Sigmoid colon (tissue), 7 donors: ENCODE measurements at regions of chr2 and their contacts with region 1.

Region 1: DNA sequence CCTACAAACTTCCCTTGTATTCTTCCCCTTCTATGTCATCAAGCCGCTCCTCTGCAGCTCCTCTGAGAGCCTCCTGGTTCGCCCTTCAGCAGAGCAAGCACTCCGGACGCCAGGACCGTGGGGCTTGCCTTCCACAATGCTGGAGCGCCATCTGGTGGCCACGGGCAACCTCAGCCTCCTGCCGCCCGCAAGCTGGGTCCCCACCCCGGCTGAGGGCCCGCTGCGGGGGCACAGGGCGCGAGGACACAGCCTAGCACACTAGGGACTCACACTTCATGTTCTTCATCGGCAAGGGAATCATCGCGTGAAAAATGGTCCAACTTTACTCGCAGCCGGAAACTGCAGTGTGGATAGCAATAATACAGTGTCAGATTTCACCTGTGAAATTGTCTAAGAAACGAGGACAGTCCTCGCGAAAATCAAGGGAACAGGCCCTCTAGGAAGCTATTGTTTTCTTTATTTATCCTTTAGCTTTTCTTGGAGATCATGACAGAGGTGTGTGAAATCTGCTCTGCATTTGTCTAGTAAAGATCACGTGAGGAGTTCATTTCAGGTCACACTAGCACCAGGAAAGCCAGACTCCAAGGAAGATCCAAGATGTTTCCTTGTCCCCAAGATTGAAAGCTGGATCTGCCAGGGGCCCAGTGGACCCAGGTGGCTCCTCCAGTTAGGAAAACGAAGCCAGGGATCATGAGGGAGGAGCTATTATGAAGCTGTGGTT is 5.8 kb downstream of the PRLH start:
- DNase-seq: peak; percentile 96
- H3K4me3 ChIP-seq: peak overlapping the region in 1 of 4 donors; percentile 29
- H3K27ac ChIP-seq: peak overlapping the region in 3 of 4 donors; percentile 16 to 40 (median 19)
- H3K4me1 ChIP-seq: peaks cover 0 to 15% (median 11%) of the 10 kb centered on the region in 4 donors
- H3K27me3 ChIP-seq: no peaks in the 10 kb centered on the region
- CTCF ChIP-seq: peak; percentile 98 to 100 (median 99)
- EP300 ChIP-seq: no peak
- POLR2A ChIP-seq: no peak

Region 2: GRCh38 chr2:237092920-237093781 is 479.0 kb before region 1 on chr2:
- intact Hi-C with region 1: loop called (anchors 5 kb)
- DNase-seq: peak; percentile 88
- H3K4me3 ChIP-seq: no peak overlapping the region
- H3K27ac ChIP-seq: peak overlapping the region; percentile 68 to 82 (median 80)
- H3K4me1 ChIP-seq: peaks cover 0 to 57% (median 29%) of the 10 kb centered on the region in 4 donors
- H3K27me3 ChIP-seq: no peaks in the 10 kb centered on the region
- CTCF ChIP-seq: peak; percentile 55 to 81 (median 68)
- EP300 ChIP-seq: peak in 2 of 4 donors; percentile 37 to 51
- POLR2A ChIP-seq: no peak

Region 3: GRCh38 chr2:237122214-237122666 is 449.9 kb before region 1 on chr2:
- intact Hi-C with region 1: loop called (anchors 10 kb)
- DNase-seq: peak; percentile 87
- H3K4me3 ChIP-seq: no peak overlapping the region
- H3K27ac ChIP-seq: peak overlapping the region in 2 of 4 donors; percentile 84 to 93
- H3K4me1 ChIP-seq: peaks cover 0 to 49% (median 35%) of the 10 kb centered on the region in 4 donors
- H3K27me3 ChIP-seq: no peaks in the 10 kb centered on the region
- CTCF ChIP-seq: peak; percentile 49 to 81 (median 66)
- EP300 ChIP-seq: no peak
- POLR2A ChIP-seq: no peak

Region 4: GRCh38 chr2:237154082-237154638 is 418.0 kb before region 1 on chr2:
- intact Hi-C with region 1: loop called (anchors 10 kb)
- DNase-seq: no peak
- H3K4me3 ChIP-seq: no peak overlapping the region
- H3K27ac ChIP-seq: peak overlapping the region in 3 of 4 donors; percentile 17 to 75 (median 73)
- H3K4me1 ChIP-seq: peaks cover 0 to 39% (median 25%) of the 10 kb centered on the region in 4 donors
- H3K27me3 ChIP-seq: no peaks in the 10 kb centered on the region
- CTCF ChIP-seq: peak; percentile 40 to 63 (median 45)
- EP300 ChIP-seq: no peak
- POLR2A ChIP-seq: no peak

Region 5: GRCh38 chr2:237434866-237435311 is 137.3 kb before region 1 on chr2:
- intact Hi-C with region 1: loop called (anchors 5 kb)
- DNase-seq: no peak
- H3K4me3 ChIP-seq: no peak overlapping the region
- H3K27ac ChIP-seq: peak overlapping the region; percentile 43 to 80 (median 65)
- H3K4me1 ChIP-seq: peaks cover 0 to 35% (median 23%) of the 10 kb centered on the region in 4 donors
- H3K27me3 ChIP-seq: no peaks in the 10 kb centered on the region
- CTCF ChIP-seq: no peak
- EP300 ChIP-seq: no peak
- POLR2A ChIP-seq: no peak

Region 6: DNA sequence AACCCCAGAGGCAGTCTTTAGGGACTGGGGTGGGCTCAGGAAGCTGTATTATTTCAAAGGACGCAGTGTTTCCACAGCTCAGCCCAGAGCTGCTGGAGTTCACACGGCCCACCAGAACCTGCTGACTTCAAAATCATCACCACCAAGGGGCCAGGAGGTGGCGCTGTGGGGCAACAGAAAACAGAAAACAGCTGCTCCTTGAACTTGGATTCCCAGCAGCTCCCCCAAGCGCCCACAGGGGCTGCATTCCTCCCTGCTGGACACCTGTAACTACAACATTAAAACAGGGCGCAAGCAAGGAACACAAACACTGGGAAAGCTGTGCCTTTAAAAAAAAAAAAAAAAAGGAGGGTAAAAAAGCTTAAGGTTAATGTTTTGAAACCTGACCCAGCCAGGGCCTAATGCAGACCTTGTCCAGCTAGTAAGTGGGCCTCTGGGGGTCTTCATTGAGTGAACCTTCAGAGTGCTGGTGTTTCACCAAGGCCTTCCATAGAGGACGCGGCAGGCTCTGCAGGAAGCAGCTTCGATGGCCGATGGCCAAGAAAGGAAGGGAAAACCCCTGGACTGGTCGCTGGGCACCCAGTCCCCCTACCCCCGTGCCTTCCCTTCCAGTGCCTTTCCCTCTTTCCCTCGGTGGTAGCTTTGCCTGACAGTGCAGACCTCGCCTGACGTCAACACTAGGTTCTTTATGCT is 59.3 kb before region 1 on chr2:
- intact Hi-C with region 1: loop called (anchors 1 kb)
- DNase-seq: peak; percentile 92
- H3K4me3 ChIP-seq: no peak overlapping the region
- H3K27ac ChIP-seq: no peak overlapping the region
- H3K4me1 ChIP-seq: peaks cover 0 to 17% (median 12%) of the 10 kb centered on the region in 4 donors
- H3K27me3 ChIP-seq: no peaks in the 10 kb centered on the region
- CTCF ChIP-seq: peak; percentile 88 to 89 (median 89)
- EP300 ChIP-seq: no peak
- POLR2A ChIP-seq: no peak